ENCODE measurements at regions of chr17 and their contacts with region 1.

Region 1: DNA sequence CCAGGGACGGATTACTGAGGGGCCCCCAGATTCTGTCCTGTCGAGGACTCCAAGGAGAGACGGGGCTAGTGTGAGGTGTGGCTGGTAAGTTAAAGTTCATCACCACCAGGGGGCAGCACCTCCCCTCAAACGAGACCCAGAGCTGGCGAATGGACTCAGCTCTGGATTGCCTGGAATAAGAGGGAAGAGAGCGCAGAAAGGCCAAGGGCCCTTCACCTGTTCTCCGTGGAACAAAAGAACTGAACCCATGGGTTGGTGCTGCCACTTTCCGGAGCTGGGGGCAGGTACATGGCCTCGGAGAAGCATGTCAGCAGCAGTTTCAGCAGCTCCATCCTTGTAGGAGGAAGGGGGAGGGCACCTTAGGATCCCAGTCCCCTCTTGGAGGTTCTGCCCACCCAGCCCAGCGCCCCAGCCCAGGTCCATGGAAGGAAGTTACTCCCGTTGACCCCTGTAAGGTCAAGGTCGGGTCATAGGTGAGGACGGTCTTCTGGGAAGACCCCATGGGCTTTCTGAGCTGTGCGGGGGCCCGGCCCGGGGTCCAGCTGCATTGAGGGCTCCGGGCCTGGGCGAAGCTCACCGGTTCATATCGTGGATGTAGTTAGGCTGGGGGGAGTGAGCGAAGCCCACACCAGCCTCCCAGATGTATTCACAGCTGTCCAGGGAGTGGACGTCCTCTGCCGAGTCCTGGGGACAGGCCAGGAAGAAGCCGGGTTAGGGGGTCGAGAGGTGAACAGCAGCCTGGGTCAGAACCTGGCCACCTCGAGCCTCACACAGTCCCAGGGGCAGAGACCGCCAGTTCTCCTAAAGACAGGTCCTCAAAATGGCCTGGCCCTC is 10.7 kb downstream of the HID1 start:
- DNase-seq: peak; percentile 91
- H3K4me3 ChIP-seq: no peak overlapping the region
- H3K27ac ChIP-seq: no peak overlapping the region
- H3K4me1 ChIP-seq: no peaks in the 10 kb centered on the region
- H3K27me3 ChIP-seq: no peaks in the 10 kb centered on the region
- CTCF ChIP-seq: peak; percentile 75

Region 2: GRCh38 chr17:74639704-74640151 is 322.1 kb before region 1 on chr17:
- CTCF ChIA-PET with region 1: no interaction called
- POLR2A ChIA-PET with region 1: no interaction called
- intact Hi-C with region 1: no loop called
- DNase-seq: no peak
- H3K4me3 ChIP-seq: no peak overlapping the region
- H3K27ac ChIP-seq: no peak overlapping the region
- H3K4me1 ChIP-seq: no peaks in the 10 kb centered on the region
- H3K27me3 ChIP-seq: peaks cover 16% of the 10 kb centered on the region
- CTCF ChIP-seq: no peak

Region 3: GRCh38 chr17:74659898-74660297 is 302.0 kb before region 1 on chr17:
- CTCF ChIA-PET with region 1: interaction called, 3 read pairs
- POLR2A ChIA-PET with region 1: no interaction called
- intact Hi-C with region 1: loop called (anchors 5 kb)
- DNase-seq: no peak
- H3K4me3 ChIP-seq: no peak overlapping the region
- H3K27ac ChIP-seq: no peak overlapping the region
- H3K4me1 ChIP-seq: no peaks in the 10 kb centered on the region
- H3K27me3 ChIP-seq: peaks cover 59% of the 10 kb centered on the region
- CTCF ChIP-seq: no peak

Region 4: DNA sequence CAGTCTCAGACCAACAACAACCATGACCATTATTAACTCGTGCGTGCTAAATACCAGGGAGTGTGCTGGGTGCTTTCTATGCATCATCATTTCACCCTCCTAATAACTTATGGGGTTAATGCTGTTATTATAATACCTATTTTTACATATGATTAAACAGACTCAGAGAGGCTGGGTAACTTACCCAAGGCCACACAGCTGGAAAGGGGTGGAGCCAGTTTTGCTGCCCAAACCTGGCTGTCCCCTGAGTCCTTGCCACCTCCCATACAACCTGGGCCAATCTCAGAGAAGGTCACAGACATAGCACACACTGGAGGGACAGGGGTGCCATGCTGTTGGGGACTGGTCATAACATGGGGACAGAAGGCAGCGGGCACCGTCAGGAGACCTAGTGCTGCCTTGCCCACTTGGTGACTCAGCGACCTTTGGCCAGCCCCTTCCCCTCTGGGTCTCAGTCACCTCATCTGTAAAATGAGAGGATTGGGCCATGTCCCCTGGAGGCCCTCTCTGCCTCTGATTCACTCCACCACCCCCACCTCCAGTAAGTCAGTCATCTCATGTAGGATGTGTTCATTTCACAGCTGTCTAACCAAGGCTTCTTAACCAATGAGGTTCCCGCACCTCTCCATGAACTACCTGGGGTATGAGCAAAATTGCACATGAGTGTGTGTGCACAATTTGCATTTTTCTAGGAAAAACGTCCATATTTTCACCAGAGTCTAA is 57.0 kb before region 1 on chr17:
- CTCF ChIA-PET with region 1: interaction called, 10 read pairs
- POLR2A ChIA-PET with region 1: interaction called, 9 read pairs
- intact Hi-C with region 1: no loop called
- DNase-seq: no peak
- H3K4me3 ChIP-seq: no peak overlapping the region
- H3K27ac ChIP-seq: no peak overlapping the region
- H3K4me1 ChIP-seq: no peaks in the 10 kb centered on the region
- H3K27me3 ChIP-seq: peaks cover 18% of the 10 kb centered on the region
- CTCF ChIP-seq: no peak

Region 5: DNA sequence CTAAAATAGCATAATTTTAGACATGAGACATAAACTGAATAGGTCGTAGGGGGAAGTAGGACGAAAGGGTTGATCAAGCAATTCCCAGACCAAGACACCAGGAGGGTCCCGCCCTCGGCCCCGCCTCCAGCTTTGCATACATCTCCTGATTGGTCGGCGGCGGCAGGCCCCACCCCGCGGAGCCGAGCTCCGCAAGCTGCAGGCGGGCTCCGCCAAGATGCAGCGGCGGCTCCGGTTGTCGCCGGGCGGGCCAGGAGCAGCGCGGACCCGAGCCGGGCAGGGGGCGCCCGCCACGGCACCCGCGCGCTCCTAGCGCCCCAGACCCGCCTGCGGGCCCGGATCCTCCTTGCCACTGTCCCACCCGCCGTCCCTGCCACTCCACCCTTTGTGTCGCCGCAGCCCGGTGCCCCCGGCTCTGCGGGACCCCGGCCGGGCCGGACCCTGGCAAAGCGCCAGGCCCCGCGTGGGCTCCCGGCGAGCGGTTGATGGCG is 25.6 kb after region 1 on chr17 and contains the start of gene CDR2L:
- CTCF ChIA-PET with region 1: interaction called, 14 read pairs
- POLR2A ChIA-PET with region 1: no interaction called
- intact Hi-C with region 1: no loop called
- DNase-seq: peak; percentile 95
- H3K4me3 ChIP-seq: peak within 1 kb of the TSS; percentile 84
- H3K27ac ChIP-seq: peak within 1 kb of the TSS; percentile 71
- H3K4me1 ChIP-seq: peaks cover 10% of the 10 kb centered on the region
- H3K27me3 ChIP-seq: no peaks in the 10 kb centered on the region
- CTCF ChIP-seq: no peak
- total RNA-seq, gene CDR2L: 5.8 and 7.6 TPM in 2 replicates

Region 6: GRCh38 chr17:75109407-75110233 is 147.7 kb after region 1 on chr17 and contains the start of gene ARMC7:
- CTCF ChIA-PET with region 1: interaction called, 5 read pairs
- POLR2A ChIA-PET with region 1: no interaction called
- intact Hi-C with region 1: loop called (anchors 10 kb)
- DNase-seq: peak; percentile 88
- H3K4me3 ChIP-seq: peak within 1 kb of the TSS; percentile 74
- H3K27ac ChIP-seq: peak within 1 kb of the TSS; percentile 43
- H3K4me1 ChIP-seq: peaks cover 12% of the 10 kb centered on the region
- H3K27me3 ChIP-seq: no peaks in the 10 kb centered on the region
- CTCF ChIP-seq: no peak
- total RNA-seq, gene ARMC7: 11.8 and 12.3 TPM in 2 replicates

Region 7: DNA sequence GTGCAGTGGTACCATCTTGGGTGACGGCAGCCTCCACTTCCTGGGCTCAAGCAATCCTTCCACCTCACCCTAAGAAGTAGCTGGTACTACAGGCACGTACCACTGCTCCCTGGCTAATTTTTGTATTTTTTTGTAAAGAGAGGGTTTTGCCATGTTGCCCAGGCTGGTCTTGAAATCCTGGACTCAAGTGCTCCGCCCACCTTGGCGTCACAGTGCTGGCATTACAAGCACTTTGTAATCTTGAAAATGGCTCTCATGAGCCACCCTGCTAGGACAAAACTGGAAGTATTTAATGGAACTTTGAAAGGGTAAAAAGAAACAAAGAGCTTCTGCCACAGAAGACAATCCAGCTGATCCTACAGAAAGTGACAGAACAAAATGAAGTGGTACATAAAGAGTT is 211.7 kb after region 1 on chr17:
- CTCF ChIA-PET with region 1: no interaction called
- POLR2A ChIA-PET with region 1: no interaction called
- intact Hi-C with region 1: no loop called
- DNase-seq: no peak
- H3K4me3 ChIP-seq: no peak overlapping the region
- H3K27ac ChIP-seq: no peak overlapping the region
- H3K4me1 ChIP-seq: peaks cover 8% of the 10 kb centered on the region
- H3K27me3 ChIP-seq: no peaks in the 10 kb centered on the region
- CTCF ChIP-seq: no peak

Region 8: GRCh38 chr17:75412455-75413317 is 450.8 kb after region 1 on chr17:
- CTCF ChIA-PET with region 1: interaction called, 9 read pairs
- POLR2A ChIA-PET with region 1: no interaction called
- intact Hi-C with region 1: loop called (anchors 2 kb)
- DNase-seq: peak; percentile 84
- H3K4me3 ChIP-seq: no peak overlapping the region
- H3K27ac ChIP-seq: no peak overlapping the region
- H3K4me1 ChIP-seq: no peaks in the 10 kb centered on the region
- H3K27me3 ChIP-seq: no peaks in the 10 kb centered on the region
- CTCF ChIP-seq: peak; percentile 83